ENCODE measurements at regions of chr14 and their contacts with region 1.

Region 1: DNA sequence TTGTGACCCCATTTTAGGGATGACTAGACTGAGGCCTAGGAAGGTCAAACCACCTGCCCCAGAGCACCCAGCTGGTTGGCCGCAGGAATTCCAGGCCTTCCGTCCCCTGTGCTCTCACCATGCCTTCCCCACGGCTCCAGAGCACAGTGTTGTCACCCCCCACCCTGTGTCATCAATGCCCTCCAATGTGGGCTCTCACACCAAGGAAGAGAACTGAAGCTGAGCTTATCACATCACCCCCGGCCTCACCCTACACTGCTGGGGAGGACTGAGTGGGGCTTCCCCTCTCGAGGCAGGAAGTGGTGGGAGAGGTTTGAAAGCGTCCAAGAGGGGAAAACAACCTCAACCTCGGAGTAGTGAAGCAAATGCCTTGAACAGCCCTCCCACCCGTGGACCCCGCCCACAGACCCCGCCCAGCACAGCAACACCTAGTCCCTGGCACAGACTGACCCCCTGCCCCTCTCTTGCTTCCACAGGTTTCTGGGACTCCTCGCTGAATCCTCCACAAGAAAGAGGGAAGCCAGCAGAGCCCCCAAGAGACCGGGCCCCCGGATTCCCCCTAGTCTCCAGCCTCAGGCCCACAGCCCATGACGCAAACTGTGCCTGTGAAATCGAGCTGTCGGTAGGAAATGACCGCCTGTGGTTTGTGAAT is 97.2 kb downstream of the LGMN start:
- DNase-seq: peak; percentile 69
- ATAC-seq: peak; percentile 77
- H3K4me3 Mint-ChIP-seq: peak overlapping the region; percentile 98
- H3K27ac Mint-ChIP-seq: peak overlapping the region; percentile 95
- H3K4me1 Mint-ChIP-seq: peaks cover 76% of the 10 kb centered on the region
- H3K27me3 Mint-ChIP-seq: no peaks in the 10 kb centered on the region
- CTCF ChIP-seq: no peak

Region 2: DNA sequence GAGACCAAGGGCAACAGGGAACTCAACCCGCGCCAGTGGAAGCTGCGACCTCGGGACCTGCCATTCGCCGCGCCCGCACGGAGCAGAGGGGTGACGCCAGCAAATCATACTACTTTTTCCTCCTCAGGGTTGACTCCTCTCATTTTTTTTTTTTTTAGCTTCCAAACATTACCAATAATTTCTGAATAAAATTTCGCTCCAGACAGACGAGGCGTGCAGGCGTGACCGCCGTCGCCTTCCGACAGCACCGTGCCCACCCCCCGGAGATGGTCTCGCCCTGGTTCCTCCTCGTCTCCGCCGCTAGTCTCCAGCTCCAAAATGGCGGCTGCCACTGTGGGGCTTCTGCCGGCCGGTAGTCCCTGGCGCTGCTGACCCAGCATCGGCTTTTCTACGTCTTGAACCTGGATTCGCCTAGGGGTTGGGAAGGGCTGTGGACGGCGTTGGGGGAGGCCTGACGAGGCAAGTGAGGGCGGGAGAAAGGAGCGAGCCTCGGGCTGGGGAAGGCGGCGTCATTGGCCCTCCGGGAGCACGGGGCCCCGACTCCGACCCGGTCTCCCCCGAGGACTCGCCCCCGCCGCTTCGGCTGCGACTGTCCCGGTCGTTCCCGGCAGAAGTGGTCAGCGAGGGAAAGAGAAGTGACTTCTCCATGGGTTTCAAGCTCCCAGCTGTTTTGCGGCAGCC is 529.4 kb before region 1 on chr14 and contains the starts of genes CPSF2 and NDUFB1:
- CTCF ChIA-PET with region 1: interaction called, 3 read pairs
- POLR2A ChIA-PET with region 1: interaction called, 13 read pairs
- intact Hi-C with region 1: no loop called
- DNase-seq: peak; percentile 78
- ATAC-seq: peak; percentile 92
- H3K4me3 Mint-ChIP-seq: peak within 1 kb of the TSS; percentile 100
- H3K27ac Mint-ChIP-seq: peak within 1 kb of the TSS; percentile 100
- H3K4me1 Mint-ChIP-seq: peaks cover 35% of the 10 kb centered on the region
- H3K27me3 Mint-ChIP-seq: no peaks in the 10 kb centered on the region
- CTCF ChIP-seq: no peak
- total RNA-seq, gene CPSF2: 46.9 and 53.2 TPM in 2 replicates
- total RNA-seq, gene NDUFB1: 88.2 and 94.2 TPM in 2 replicates

Region 3: GRCh38 chr14:92439537-92440344 is 211.5 kb before region 1 on chr14:
- CTCF ChIA-PET with region 1: no interaction called
- POLR2A ChIA-PET with region 1: interaction called, 10 read pairs
- intact Hi-C with region 1: no loop called
- DNase-seq: peak; percentile 32
- ATAC-seq: peak; percentile 73
- H3K4me3 Mint-ChIP-seq: peak overlapping the region; percentile 29
- H3K27ac Mint-ChIP-seq: peak overlapping the region; percentile 31
- H3K4me1 Mint-ChIP-seq: peaks cover 44% of the 10 kb centered on the region
- H3K27me3 Mint-ChIP-seq: no peaks in the 10 kb centered on the region
- CTCF ChIP-seq: no peak

Region 4: DNA sequence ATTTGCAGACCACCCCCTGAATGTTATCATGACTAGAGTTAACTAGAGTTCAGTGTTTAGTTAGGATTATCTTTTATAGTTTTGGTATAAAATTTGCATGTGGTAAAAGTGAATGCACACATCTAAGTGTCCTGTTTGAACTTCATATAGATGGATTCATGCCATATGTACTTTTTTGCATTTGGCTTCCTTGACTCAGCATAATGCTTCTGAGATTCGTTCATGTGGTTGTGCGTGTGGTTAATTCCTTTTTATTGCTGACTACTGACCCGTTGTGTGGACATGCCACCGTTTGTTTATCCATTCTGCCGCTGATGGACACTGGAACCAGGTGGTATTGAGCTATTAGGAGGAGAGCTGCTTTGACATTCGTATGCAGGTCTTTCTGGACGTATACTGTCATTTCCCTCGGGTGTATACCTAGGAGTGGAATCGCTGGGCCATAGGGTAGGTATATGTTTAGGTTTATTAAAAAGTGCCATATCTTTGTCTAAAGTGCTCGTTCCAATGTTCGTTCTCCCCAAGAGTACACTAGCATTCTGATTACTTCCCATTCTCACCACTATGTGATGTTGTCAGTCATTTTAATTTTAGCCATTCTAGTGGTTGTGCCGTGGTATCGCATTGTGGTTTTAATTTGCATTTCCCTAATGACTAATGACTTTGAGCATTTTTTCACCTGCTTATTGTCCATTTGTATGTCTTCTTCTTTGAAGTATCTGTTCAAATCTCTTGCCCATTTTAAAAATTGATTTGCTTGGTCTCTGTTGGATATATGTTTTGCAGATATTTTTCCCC is 100.0 kb before region 1 on chr14:
- CTCF ChIA-PET with region 1: no interaction called
- POLR2A ChIA-PET with region 1: interaction called, 3 read pairs
- intact Hi-C with region 1: loop called (anchors 1 kb)
- DNase-seq: no peak
- ATAC-seq: peak; percentile 78
- H3K4me3 Mint-ChIP-seq: peak overlapping the region; percentile 55
- H3K27ac Mint-ChIP-seq: no peak overlapping the region
- H3K4me1 Mint-ChIP-seq: peaks cover 44% of the 10 kb centered on the region
- H3K27me3 Mint-ChIP-seq: peaks cover 7% of the 10 kb centered on the region
- CTCF ChIP-seq: no peak

Region 5: GRCh38 chr14:92612988-92613658 is 38.1 kb before region 1 on chr14:
- CTCF ChIA-PET with region 1: interaction called, 38 read pairs
- POLR2A ChIA-PET with region 1: interaction called, 135 read pairs
- intact Hi-C with region 1: loop called (anchors 1 kb)
- DNase-seq: peak; percentile 58
- ATAC-seq: peak; percentile 8
- H3K4me3 Mint-ChIP-seq: peak overlapping the region; percentile 46
- H3K27ac Mint-ChIP-seq: peak overlapping the region; percentile 75
- H3K4me1 Mint-ChIP-seq: peaks cover 74% of the 10 kb centered on the region
- H3K27me3 Mint-ChIP-seq: no peaks in the 10 kb centered on the region
- CTCF ChIP-seq: no peak

Region 6: GRCh38 chr14:92633274-92633616 is 18.0 kb before region 1 on chr14:
- CTCF ChIA-PET with region 1: interaction called, 3 read pairs
- POLR2A ChIA-PET with region 1: interaction called, 20 read pairs
- intact Hi-C with region 1: loop called (anchors 1 kb)
- DNase-seq: peak; percentile 27
- ATAC-seq: peak; percentile 81
- H3K4me3 Mint-ChIP-seq: peak overlapping the region; percentile 70
- H3K27ac Mint-ChIP-seq: peak overlapping the region; percentile 54
- H3K4me1 Mint-ChIP-seq: peaks cover 42% of the 10 kb centered on the region
- H3K27me3 Mint-ChIP-seq: no peaks in the 10 kb centered on the region
- CTCF ChIP-seq: no peak

Region 7: DNA sequence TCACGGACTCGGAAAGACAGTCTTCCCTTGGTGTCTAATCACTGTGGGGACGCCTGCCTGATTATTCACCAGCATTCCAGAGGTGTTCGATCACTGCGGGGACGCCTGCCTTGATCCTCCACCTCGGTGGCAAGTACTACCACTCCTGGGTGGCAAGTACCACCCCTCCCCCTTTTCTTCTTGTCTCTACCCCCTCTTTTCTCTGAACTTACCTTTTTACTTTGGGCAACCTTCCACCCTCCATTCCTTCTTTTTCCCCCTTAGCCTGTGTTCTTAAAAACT is 109.2 kb after region 1 on chr14:
- CTCF ChIA-PET with region 1: no interaction called
- POLR2A ChIA-PET with region 1: no interaction called
- intact Hi-C with region 1: no loop called
- DNase-seq: no peak
- ATAC-seq: no peak
- H3K4me3 Mint-ChIP-seq: no peak overlapping the region
- H3K27ac Mint-ChIP-seq: no peak overlapping the region
- H3K4me1 Mint-ChIP-seq: peaks cover 21% of the 10 kb centered on the region
- H3K27me3 Mint-ChIP-seq: no peaks in the 10 kb centered on the region
- CTCF ChIP-seq: no peak

Region 8: GRCh38 chr14:92906823-92907222 is 255.6 kb after region 1 on chr14:
- CTCF ChIA-PET with region 1: no interaction called
- POLR2A ChIA-PET with region 1: no interaction called
- intact Hi-C with region 1: no loop called
- DNase-seq: no peak
- ATAC-seq: no peak
- H3K4me3 Mint-ChIP-seq: no peak overlapping the region
- H3K27ac Mint-ChIP-seq: no peak overlapping the region
- H3K4me1 Mint-ChIP-seq: no peaks in the 10 kb centered on the region
- H3K27me3 Mint-ChIP-seq: peaks cover 25% of the 10 kb centered on the region
- CTCF ChIP-seq: no peak

Measured in activated B cell treated with CpG ODN at 0.5 μM for 24 hours (primary cell).